CD14-positive monocyte (primary cell): ENCODE measurements at regions of chr3 and their contacts with region 1.

Region 1: GRCh38 chr3:47513125-47513929 is at the start of gene ELP6:
- DNase-seq: peak; percentile 94 to 97 (median 94)
- H3K4me3 ChIP-seq: peak within 1 kb of the TSS; percentile 86 to 93 (median 92)
- H3K4me3 Mint-ChIP-seq: peak within 1 kb of the TSS; percentile 94 to 96
- H3K27ac ChIP-seq: peak within 1 kb of the TSS; percentile 83 to 89
- H3K27ac Mint-ChIP-seq: peak within 1 kb of the TSS; percentile 90 to 98 (median 96)
- H3K4me1 ChIP-seq: peaks cover 8 to 10% of the 10 kb centered on the region in 2 donors
- H3K4me1 Mint-ChIP-seq: peaks cover 22% of the 10 kb centered on the region
- H3K27me3 ChIP-seq: no peaks in the 10 kb centered on the region
- H3K27me3 Mint-ChIP-seq: peaks cover 0 to 2% (median 2%) of the 10 kb centered on the region in 3 donors
- CTCF ChIP-seq: peak; percentile 55
- polyA plus RNA-seq, gene ELP6: 14.0 to 18.3 (median 14.9) TPM

Region 2: GRCh38 chr3:47420511-47421484 is 92.5 kb before region 1 on chr3:
- intact Hi-C with region 1: loop called in 1 of 2 experiments (anchors 5 kb)
- DNase-seq: peak; percentile 86 to 90 (median 90)
- H3K4me3 ChIP-seq: peak overlapping the region in 1 of 3 experiments; percentile 58
- H3K4me3 Mint-ChIP-seq: peak overlapping the region; percentile 55 to 67
- H3K27ac ChIP-seq: peak overlapping the region; percentile 44 to 82
- H3K27ac Mint-ChIP-seq: peak overlapping the region; percentile 90 to 98 (median 96)
- H3K4me1 ChIP-seq: peaks cover 9 to 15% of the 10 kb centered on the region in 2 donors
- H3K4me1 Mint-ChIP-seq: peaks cover 12% of the 10 kb centered on the region
- H3K27me3 ChIP-seq: no peaks in the 10 kb centered on the region
- H3K27me3 Mint-ChIP-seq: peaks cover 0 to 1% (median 0%) of the 10 kb centered on the region in 3 donors
- CTCF ChIP-seq: peak; percentile 90

Region 3: GRCh38 chr3:47475570-47476329 is 37.6 kb before region 1 on chr3 and contains the start of gene SCAP:
- intact Hi-C with region 1: loop called (anchors 5 kb)
- DNase-seq: peak; percentile 80 to 92 (median 91)
- H3K4me3 ChIP-seq: peak within 1 kb of the TSS; percentile 83 to 89 (median 89)
- H3K4me3 Mint-ChIP-seq: peak within 1 kb of the TSS; percentile 82 to 92
- H3K27ac ChIP-seq: peak within 1 kb of the TSS in 1 of 2 donors; percentile 43
- H3K27ac Mint-ChIP-seq: peak within 1 kb of the TSS in 6 of 7 donors; percentile 40 to 80 (median 74)
- H3K4me1 ChIP-seq: peaks cover 16 to 23% of the 10 kb centered on the region in 2 donors
- H3K4me1 Mint-ChIP-seq: peaks cover 22% of the 10 kb centered on the region
- H3K27me3 ChIP-seq: no peaks in the 10 kb centered on the region
- H3K27me3 Mint-ChIP-seq: no peaks in the 10 kb centered on the region
- CTCF ChIP-seq: peak; percentile 89
- polyA plus RNA-seq, gene SCAP: 26.3 to 27.8 (median 27.7) TPM

Region 4: GRCh38 chr3:47634996-47635395 is 121.7 kb after region 1 on chr3:
- intact Hi-C with region 1: no loop called
- DNase-seq: peak; percentile 2 to 15 (median 12)
- H3K4me3 ChIP-seq: peak overlapping the region in 1 of 3 experiments; percentile 28
- H3K4me3 Mint-ChIP-seq: peak overlapping the region in 1 of 2 donors; percentile 68
- H3K27ac ChIP-seq: peak overlapping the region; percentile 38 to 75
- H3K27ac Mint-ChIP-seq: peak overlapping the region; percentile 6 to 82 (median 70)
- H3K4me1 ChIP-seq: peaks cover 11 to 18% of the 10 kb centered on the region in 2 donors
- H3K4me1 Mint-ChIP-seq: peaks cover 28% of the 10 kb centered on the region
- H3K27me3 ChIP-seq: no peaks in the 10 kb centered on the region
- H3K27me3 Mint-ChIP-seq: no peaks in the 10 kb centered on the region
- CTCF ChIP-seq: no peak

Region 5: DNA sequence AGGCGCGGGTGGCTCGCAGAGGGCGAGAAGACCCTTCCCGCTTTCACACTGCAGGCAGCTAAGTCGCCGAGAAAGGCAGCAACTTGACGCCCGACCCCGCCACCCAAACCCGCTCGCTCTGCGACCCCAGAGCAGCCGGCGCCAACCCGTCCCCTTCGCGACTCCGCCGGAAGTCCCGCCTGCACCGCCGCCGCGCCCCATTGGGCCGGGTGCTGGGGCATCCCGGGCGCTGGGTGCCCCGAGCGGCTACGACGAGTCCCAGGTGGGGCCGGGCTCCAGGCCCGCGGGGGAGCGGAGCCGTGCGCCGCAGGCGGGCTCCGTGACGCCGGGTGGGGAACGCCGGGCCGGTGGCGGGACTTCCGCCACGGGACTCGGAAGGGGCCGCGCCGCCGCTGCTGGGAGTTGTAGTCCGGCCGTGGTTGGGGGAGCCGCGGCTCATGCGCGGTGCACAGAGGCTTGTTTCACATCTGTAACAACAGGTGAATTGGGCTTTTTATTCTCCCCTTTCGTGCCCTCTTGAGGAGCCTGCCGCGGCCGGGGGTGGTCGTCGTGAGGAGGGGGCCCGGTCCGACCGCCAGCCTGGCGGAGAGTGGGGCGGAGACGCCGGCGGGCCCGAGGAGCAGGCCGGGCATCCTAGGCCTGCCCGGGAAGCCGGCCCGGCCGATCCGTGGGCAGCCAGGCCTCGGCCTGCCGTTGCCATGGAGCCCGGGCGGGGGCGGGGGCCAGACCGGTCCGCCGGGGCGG is 289.6 kb after region 1 on chr3 and contains the start of gene DHX30:
- intact Hi-C with region 1: loop called in 1 of 2 experiments (anchors 5 kb)
- DNase-seq: peak; percentile 60 to 76 (median 69)
- H3K4me3 ChIP-seq: peak within 1 kb of the TSS; percentile 65 to 91 (median 87)
- H3K4me3 Mint-ChIP-seq: peak within 1 kb of the TSS; percentile 88 to 94
- H3K27ac ChIP-seq: peak within 1 kb of the TSS; percentile 58 to 83
- H3K27ac Mint-ChIP-seq: peak within 1 kb of the TSS; percentile 77 to 93 (median 87)
- H3K4me1 ChIP-seq: peaks cover 13 to 17% of the 10 kb centered on the region in 2 donors
- H3K4me1 Mint-ChIP-seq: peaks cover 21% of the 10 kb centered on the region
- H3K27me3 ChIP-seq: no peaks in the 10 kb centered on the region
- H3K27me3 Mint-ChIP-seq: peaks cover 0 to 4% (median 1%) of the 10 kb centered on the region in 3 donors
- CTCF ChIP-seq: no peak
- polyA plus RNA-seq, gene DHX30: 19.4 to 43.9 (median 20.1) TPM

Region 6: DNA sequence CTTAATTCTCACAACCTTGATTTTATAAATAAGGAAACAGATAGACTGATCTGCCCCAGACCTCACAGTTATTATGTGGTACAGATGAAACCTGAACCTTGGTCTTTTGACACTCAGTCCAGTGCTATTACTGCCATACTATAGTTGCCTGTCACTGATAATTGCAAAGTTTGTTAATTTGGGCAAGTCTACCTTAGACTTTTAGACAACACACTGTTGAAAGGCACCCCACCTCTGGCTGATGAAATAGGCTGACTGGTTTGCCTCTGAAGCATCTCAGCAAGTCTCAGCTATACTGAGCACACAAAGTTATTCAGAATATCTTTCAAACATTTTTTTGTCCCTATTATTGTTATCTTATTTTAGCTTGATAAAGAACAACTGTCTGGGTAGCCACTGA is 556.0 kb after region 1 on chr3:
- intact Hi-C with region 1: no loop called
- DNase-seq: no peak
- H3K4me3 ChIP-seq: no peak overlapping the region
- H3K4me3 Mint-ChIP-seq: no peak overlapping the region
- H3K27ac ChIP-seq: no peak overlapping the region
- H3K27ac Mint-ChIP-seq: no peak overlapping the region
- H3K4me1 ChIP-seq: peaks cover 0 to 3% of the 10 kb centered on the region in 2 donors
- H3K4me1 Mint-ChIP-seq: peaks cover 11% of the 10 kb centered on the region
- H3K27me3 ChIP-seq: no peaks in the 10 kb centered on the region
- H3K27me3 Mint-ChIP-seq: no peaks in the 10 kb centered on the region
- CTCF ChIP-seq: no peak